Activated CD4-positive, alpha-beta memory T cell treated with anti-CD3 and anti-CD28 coated beads for 36 hours (primary cell): ENCODE measurements at regions of chr11 and their contacts with region 1.

Region 1: GRCh38 chr11:59753650-59754493 is 1.3 kb upstream of the STX3 start:
- DNase-seq: peak; percentile 88
- H3K4me3 Mint-ChIP-seq: peak overlapping the region; percentile 84
- H3K27ac Mint-ChIP-seq: no peak overlapping the region
- H3K4me1 Mint-ChIP-seq: peaks cover 17% of the 10 kb centered on the region
- H3K27me3 Mint-ChIP-seq: peaks cover 3% of the 10 kb centered on the region

Region 2: DNA sequence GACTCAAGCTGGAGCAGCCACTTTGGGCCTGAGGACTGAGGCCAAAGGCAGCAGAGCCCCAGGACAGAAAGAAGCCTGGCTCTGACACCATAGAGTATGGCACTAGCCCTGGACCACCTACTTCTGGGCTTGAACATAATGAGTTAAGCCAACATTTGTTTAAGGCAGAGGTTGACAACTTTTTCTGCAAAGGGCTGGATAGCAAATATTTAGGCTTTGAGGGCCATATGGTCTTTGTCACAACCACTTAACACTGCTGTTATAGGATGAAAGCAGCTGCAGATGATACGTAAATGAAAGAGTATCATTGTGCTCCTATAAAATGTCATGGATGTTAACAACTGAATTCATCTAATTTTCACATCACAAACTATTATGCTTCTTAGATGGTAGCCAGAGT is 154.9 kb before region 1 on chr11:
- CTCF ChIA-PET with region 1: no interaction called
- POLR2A ChIA-PET with region 1: no interaction called
- intact Hi-C with region 1: no loop called
- DNase-seq: no peak
- H3K4me3 Mint-ChIP-seq: no peak overlapping the region
- H3K27ac Mint-ChIP-seq: no peak overlapping the region
- H3K4me1 Mint-ChIP-seq: peaks cover 8% of the 10 kb centered on the region
- H3K27me3 Mint-ChIP-seq: no peaks in the 10 kb centered on the region

Region 3: DNA sequence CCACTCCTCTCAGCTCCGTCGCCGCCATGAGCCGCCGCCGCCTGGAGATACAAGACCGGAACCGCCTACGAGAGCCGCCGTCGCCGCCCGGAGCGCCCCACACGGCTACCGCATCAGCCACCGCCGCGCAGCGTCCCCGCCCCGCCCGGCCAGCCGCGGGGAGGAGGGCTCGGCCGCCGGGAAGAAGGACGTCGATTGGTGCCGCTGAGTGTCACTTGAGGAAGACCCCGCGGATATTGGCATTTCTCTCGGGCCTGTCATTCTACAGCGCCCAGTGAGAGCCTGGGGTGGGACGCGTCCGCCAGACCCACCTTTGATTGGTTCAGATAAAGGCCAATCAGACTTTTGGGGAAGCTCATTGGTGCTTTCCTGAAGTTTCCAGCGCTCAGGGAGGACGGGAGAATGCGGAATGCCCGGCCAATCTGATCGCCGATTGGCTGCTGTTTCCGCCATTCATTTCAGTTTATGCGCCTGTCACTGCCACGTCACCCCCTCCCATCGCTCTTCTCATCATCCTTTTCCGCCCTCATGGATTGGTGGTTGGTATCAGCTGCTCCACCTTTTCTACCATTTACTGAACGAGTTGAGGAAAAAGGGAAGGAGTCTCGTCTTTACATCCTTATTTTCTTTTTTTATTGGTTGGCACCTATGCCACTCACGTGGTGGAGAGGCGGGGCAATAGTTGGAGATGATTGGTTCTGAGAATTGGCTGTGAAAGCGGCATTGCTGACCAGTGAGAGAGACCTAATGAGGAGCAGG is 138.1 kb before region 1 on chr11 and contains the start of gene OSBP:
- CTCF ChIA-PET with region 1: interaction called, 3 read pairs
- POLR2A ChIA-PET with region 1: no interaction called
- intact Hi-C with region 1: loop called (anchors 2 kb)
- DNase-seq: peak; percentile 99
- H3K4me3 Mint-ChIP-seq: peak within 1 kb of the TSS; percentile 89
- H3K27ac Mint-ChIP-seq: peak within 1 kb of the TSS; percentile 95
- H3K4me1 Mint-ChIP-seq: peaks cover 41% of the 10 kb centered on the region
- H3K27me3 Mint-ChIP-seq: no peaks in the 10 kb centered on the region
- total RNA-seq, gene OSBP: 37.2 to 40.9 TPM

Region 4: GRCh38 chr11:59698506-59698905 is 55.4 kb before region 1 on chr11:
- CTCF ChIA-PET with region 1: no interaction called
- POLR2A ChIA-PET with region 1: no interaction called
- intact Hi-C with region 1: no loop called
- DNase-seq: no peak
- H3K4me3 Mint-ChIP-seq: no peak overlapping the region
- H3K27ac Mint-ChIP-seq: no peak overlapping the region
- H3K4me1 Mint-ChIP-seq: no peaks in the 10 kb centered on the region
- H3K27me3 Mint-ChIP-seq: peaks cover 5% of the 10 kb centered on the region

Region 5: GRCh38 chr11:59767225-59767611 is 13.3 kb after region 1 on chr11:
- CTCF ChIA-PET with region 1: interaction called, 28 read pairs
- POLR2A ChIA-PET with region 1: interaction called, 3 read pairs
- intact Hi-C with region 1: loop called (anchors 1 kb)
- DNase-seq: no peak
- H3K4me3 Mint-ChIP-seq: no peak overlapping the region
- H3K27ac Mint-ChIP-seq: no peak overlapping the region
- H3K4me1 Mint-ChIP-seq: peaks cover 19% of the 10 kb centered on the region
- H3K27me3 Mint-ChIP-seq: no peaks in the 10 kb centered on the region

Region 6: GRCh38 chr11:59802639-59803176 is 48.8 kb after region 1 on chr11:
- CTCF ChIA-PET with region 1: interaction called, 132 read pairs
- POLR2A ChIA-PET with region 1: no interaction called
- intact Hi-C with region 1: loop called (anchors 1 kb)
- DNase-seq: peak; percentile 31
- H3K4me3 Mint-ChIP-seq: no peak overlapping the region
- H3K27ac Mint-ChIP-seq: no peak overlapping the region
- H3K4me1 Mint-ChIP-seq: no peaks in the 10 kb centered on the region
- H3K27me3 Mint-ChIP-seq: no peaks in the 10 kb centered on the region

Region 7: GRCh38 chr11:59918987-59919589 is 165.2 kb after region 1 on chr11:
- CTCF ChIA-PET with region 1: interaction called, 5 read pairs
- POLR2A ChIA-PET with region 1: interaction called, 3 read pairs
- intact Hi-C with region 1: loop called (anchors 2 kb)
- DNase-seq: peak; percentile 33
- H3K4me3 Mint-ChIP-seq: no peak overlapping the region
- H3K27ac Mint-ChIP-seq: no peak overlapping the region
- H3K4me1 Mint-ChIP-seq: no peaks in the 10 kb centered on the region
- H3K27me3 Mint-ChIP-seq: peaks cover 2% of the 10 kb centered on the region

Region 8: GRCh38 chr11:60018058-60018457 is 264.2 kb after region 1 on chr11:
- CTCF ChIA-PET with region 1: no interaction called
- POLR2A ChIA-PET with region 1: no interaction called
- intact Hi-C with region 1: no loop called
- DNase-seq: no peak
- H3K4me3 Mint-ChIP-seq: no peak overlapping the region
- H3K27ac Mint-ChIP-seq: no peak overlapping the region
- H3K4me1 Mint-ChIP-seq: no peaks in the 10 kb centered on the region
- H3K27me3 Mint-ChIP-seq: peaks cover 9% of the 10 kb centered on the region